Heart right ventricle (tissue), 16 donors: ENCODE measurements at regions of chr17 and their contacts with region 1.

Region 1: DNA sequence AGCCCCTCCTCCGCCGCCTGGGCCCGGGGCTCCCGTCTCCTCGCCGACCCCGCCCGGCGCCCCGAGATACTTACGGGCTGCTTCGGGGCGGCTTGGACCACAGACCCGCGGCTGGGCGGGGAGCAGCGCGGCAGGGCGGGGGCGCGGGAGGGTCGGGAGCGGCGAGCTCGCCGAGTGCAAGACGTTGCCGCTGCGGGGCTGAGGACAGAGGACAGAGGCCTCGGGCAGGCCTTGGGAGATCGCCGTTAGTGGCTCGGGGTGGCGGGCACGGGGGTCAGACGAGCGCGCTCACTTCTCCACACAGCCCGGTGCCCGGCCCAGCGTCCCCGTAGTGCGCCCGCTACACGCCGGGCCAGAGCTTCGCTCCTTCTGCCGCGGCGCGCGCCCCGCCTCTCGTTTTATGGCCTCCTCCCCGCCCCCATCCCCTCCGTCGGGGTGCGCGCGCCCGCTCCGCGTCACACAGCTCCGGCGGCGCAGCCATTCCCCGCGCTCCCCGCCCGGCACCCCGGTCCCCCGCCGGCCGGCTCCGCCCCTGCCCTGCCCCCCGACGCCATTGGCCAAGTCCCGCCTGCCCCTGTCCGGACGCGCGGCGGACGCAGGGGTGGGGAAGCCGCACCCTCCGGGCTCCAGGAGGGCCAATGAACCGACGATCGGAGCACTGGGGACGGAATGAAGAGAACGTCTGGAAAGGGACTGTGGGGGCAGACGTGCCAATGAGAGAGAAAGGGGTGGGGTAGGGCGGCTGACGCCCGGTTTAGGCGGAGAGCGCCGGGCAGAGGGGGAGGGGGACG is at the start of gene TOB1:
- DNase-seq: peak; percentile 98 to 99
- ATAC-seq: peak; percentile 89 to 95 (median 90)
- H3K4me3 ChIP-seq: peak within 1 kb of the TSS; percentile 69 to 97 (median 88)
- H3K27ac ChIP-seq: peak within 1 kb of the TSS; percentile 98 to 100 (median 100)
- H3K4me1 ChIP-seq: peaks cover 0 to 57% (median 42%) of the 10 kb centered on the region in 9 donors
- H3K27me3 ChIP-seq: no peaks in the 10 kb centered on the region
- CTCF ChIP-seq: peak in 1 of 9 donors; percentile 2
- total RNA-seq, gene TOB1: 54.7 to 134 (median 106) TPM

Region 2: GRCh38 chr17:50845240-50846147 is 20.7 kb before region 1 on chr17:
- intact Hi-C with region 1: no loop called
- DNase-seq: peak in 1 of 2 donors; percentile 61
- ATAC-seq: peak; percentile 41 to 90 (median 80)
- H3K4me3 ChIP-seq: no peak overlapping the region
- H3K27ac ChIP-seq: peak overlapping the region; percentile 15 to 88 (median 77)
- H3K4me1 ChIP-seq: peaks cover 0 to 34% (median 3%) of the 10 kb centered on the region in 9 donors
- H3K27me3 ChIP-seq: no peaks in the 10 kb centered on the region
- CTCF ChIP-seq: no peak

Region 3: GRCh38 chr17:50904521-50905459 is 38.6 kb after region 1 on chr17:
- intact Hi-C with region 1: loop called in 3 of 10 experiments (anchors 2 to 5 kb)
- DNase-seq: peak in 1 of 2 donors; percentile 53
- ATAC-seq: peak; percentile 45 to 78 (median 70)
- H3K4me3 ChIP-seq: no peak overlapping the region
- H3K27ac ChIP-seq: peak overlapping the region; percentile 61 to 91 (median 86)
- H3K4me1 ChIP-seq: peaks cover 8 to 46% (median 26%) of the 10 kb centered on the region in 9 donors
- H3K27me3 ChIP-seq: no peaks in the 10 kb centered on the region
- CTCF ChIP-seq: no peak

Region 4: GRCh38 chr17:50931144-50931908 is 65.1 kb after region 1 on chr17:
- intact Hi-C with region 1: loop called in 5 of 10 experiments (anchors 1 to 5 kb)
- DNase-seq: peak; percentile 87 to 89
- ATAC-seq: peak; percentile 92 to 96 (median 94)
- H3K4me3 ChIP-seq: peak overlapping the region; percentile 16 to 62 (median 52)
- H3K27ac ChIP-seq: peak overlapping the region; percentile 91 to 99 (median 98)
- H3K4me1 ChIP-seq: peaks cover 8 to 44% (median 32%) of the 10 kb centered on the region in 9 donors
- H3K27me3 ChIP-seq: no peaks in the 10 kb centered on the region
- CTCF ChIP-seq: peak in 1 of 9 donors; percentile 7

Region 5: DNA sequence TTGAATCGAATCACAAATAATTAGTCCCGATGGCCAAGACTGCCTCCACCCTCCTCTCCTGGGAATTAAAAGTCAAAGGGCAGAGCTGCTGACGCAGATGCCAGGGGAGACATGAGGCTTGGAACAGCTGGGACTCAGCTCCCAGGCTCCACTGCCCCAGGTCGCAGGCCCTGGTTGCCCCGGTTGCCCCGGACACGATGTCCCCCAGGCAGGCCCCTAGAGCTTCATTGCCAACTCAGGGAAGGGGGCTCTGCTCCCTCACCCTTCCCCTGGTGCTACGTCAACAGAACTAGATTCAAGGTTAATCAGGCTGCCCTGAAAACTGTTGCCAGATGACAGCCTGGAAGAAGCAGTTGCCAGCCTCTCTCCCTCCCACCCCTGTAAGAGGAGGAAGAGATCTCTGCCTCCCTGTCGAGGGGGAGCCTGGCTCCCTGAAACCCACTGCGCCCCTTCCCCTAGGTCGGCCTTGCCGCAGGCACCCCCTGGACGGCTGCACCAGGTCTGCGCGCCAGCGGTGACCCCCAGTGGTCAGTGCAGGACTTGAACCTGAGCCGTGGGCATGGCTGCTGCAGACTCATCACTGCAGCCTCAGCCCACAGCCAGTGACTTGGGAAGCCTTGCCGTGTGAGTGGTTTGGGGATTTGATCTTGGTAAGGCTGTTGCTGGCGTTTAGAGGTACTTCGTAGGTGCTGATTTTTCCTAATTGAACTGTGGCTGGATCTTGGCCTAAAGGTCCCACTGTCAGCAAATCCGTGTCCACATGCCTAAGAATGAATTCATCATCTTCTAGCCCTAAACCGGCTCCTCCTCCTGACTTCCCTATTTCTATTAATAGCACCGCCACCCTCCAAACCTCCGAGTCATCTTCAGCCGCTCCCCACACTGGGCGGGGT is 84.1 kb after region 1 on chr17:
- intact Hi-C with region 1: loop called in 7 of 10 experiments (anchors 1 to 5 kb)
- DNase-seq: peak; percentile 77 to 80
- ATAC-seq: peak; percentile 77 to 89 (median 85)
- H3K4me3 ChIP-seq: peak overlapping the region in 3 of 10 donors; percentile 0 to 5 (median 2)
- H3K27ac ChIP-seq: peak overlapping the region; percentile 44 to 88 (median 79)
- H3K4me1 ChIP-seq: peaks cover 22 to 64% (median 51%) of the 10 kb centered on the region in 9 donors
- H3K27me3 ChIP-seq: no peaks in the 10 kb centered on the region
- CTCF ChIP-seq: peak; percentile 75 to 93 (median 85)

Region 6: DNA sequence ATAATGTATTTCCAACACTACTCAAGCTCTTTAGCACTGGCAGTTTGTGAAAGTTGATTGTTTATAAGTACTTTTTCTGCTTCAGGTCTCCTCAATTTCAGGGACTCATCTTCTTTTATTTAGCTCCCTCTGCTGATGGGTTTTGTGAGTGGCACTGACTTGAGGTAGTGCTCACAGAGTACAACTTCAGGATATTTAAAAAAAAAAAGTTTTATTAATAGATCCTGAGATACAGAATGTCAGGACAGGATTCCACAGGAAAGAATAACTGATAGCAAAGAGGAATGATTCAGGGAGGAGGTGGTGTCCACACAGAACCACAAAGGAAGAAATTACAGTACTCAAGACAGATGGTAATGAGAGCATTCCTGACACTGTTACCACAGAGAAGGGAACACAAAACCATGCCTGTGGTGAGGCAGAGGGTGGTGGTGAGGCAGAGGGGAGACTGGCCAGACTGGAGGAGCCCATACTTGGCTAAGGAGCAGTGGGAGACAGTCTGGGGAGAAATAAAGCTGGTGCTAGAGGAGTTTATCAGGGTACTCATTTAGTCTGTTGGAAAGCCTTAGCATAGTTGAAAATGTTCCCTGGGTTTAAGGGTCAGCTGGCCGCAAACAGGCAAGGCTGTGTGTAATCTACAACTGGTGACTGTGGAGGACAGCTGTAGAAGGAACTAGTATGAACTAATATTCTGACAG is 190.8 kb after region 1 on chr17:
- intact Hi-C with region 1: no loop called
- DNase-seq: peak in 1 of 2 donors; percentile 51
- ATAC-seq: peak; percentile 78 to 91 (median 82)
- H3K4me3 ChIP-seq: peak overlapping the region in 2 of 10 donors; percentile 1 to 9
- H3K27ac ChIP-seq: peak overlapping the region in 9 of 10 donors; percentile 49 to 76 (median 60)
- H3K4me1 ChIP-seq: peaks cover 0 to 29% (median 23%) of the 10 kb centered on the region in 9 donors
- H3K27me3 ChIP-seq: no peaks in the 10 kb centered on the region
- CTCF ChIP-seq: peak; percentile 22 to 74 (median 60)

Region 7: DNA sequence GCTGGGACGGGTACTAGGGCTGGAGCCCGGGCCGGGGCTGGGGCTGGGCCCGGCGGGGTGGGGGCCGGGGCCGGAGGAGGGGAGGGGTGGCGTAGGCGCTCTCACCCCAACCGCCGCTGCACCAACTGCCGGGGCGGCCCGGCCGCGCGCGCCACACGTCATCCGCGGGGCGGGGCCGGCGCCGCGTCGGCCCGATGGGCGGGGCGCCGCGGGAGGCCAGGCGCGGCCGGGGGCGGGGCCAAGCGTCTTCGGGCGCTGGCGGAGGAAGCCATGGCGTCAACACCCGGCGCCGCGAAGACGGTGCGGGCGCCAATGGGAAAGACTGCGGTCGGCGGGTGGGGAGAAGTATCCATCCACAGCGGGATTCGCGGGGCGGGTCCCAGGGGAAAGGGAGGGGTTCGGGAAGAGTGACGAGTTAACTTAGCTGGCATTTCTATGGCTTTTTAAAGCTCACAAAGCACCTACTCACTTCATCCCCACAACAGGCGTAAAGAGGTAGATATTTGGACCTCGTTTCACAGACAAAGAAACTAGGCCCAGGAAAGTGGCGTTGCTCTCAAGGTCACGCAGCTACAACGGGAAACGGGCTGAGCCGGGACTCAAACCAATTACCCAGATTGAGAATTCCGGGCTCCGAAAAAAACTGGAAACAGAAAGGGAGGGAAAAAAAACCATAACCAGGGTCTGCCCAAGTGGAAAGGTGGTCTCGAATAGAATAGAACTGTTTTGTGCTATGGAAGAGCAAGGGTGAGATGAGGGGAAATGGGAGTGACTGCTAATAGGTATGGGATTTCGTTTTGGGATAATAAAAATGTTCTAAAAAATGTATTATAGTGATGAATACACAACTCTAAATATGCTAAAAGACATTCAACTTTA is 254.8 kb after region 1 on chr17 and contains the start of gene SPAG9:
- intact Hi-C with region 1: loop called in 1 of 10 experiments (anchors 2 kb)
- DNase-seq: peak; percentile 97 to 98
- ATAC-seq: peak; percentile 89 to 97 (median 92)
- H3K4me3 ChIP-seq: peak within 1 kb of the TSS; percentile 74 to 99 (median 98)
- H3K27ac ChIP-seq: peak within 1 kb of the TSS; percentile 95 to 100 (median 98)
- H3K4me1 ChIP-seq: peaks cover 9 to 47% (median 29%) of the 10 kb centered on the region in 9 donors
- H3K27me3 ChIP-seq: no peaks in the 10 kb centered on the region
- CTCF ChIP-seq: no peak
- total RNA-seq, gene SPAG9: 43.3 to 65.8 (median 52.8) TPM